ENCODE measurements at regions of chr11 and their contacts with region 1.

Region 1: DNA sequence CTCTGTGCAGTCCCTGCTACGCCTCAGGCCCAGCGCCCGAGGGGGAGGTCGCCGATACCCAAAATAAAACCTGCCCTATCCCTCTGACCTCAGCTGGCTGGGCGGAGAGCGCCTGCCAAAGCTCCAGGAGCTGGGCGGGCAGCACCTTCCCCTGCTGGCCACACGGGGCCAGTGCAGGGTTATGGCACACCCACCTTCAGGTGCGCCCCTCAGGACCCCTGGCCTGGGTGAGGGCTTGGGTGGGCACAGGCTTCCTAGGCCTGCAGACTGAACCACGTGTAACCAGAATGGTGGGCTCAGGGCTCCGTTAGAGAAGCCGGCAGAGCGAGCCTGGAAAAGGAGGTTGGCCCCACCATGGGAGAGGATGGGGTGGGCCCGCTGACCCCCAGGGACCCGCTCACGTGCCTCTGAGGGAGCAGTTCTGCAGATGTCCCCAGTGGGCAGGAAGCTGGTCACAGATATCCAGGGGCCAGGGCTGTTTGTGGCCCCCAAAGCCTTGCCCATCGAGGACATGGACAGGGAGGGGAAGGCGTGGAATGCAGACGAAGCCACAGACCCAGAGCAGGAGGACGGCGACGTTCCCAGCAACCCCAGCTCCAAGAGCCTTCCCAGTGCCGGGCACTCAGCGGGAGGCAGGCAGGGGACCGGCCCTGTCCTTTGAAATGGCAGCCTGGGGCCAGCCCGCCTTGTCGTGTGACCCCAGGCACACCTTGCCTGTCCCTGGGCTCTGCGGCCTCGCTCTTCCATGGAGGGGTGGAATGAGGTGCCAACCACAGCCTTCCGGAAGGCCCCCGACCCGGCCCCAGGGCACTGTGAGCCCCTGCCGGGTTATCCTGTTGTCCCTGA is 1.6 kb upstream of the TNNT3 start:
- DNase-seq: no peak
- ATAC-seq: peak in 1 of 2 donors; percentile 9
- H3K4me3 ChIP-seq: no peak overlapping the region
- H3K27ac ChIP-seq: no peak overlapping the region
- H3K4me1 ChIP-seq: no peaks in the 10 kb centered on the region
- H3K27me3 ChIP-seq: no peaks in the 10 kb centered on the region
- CTCF ChIP-seq: peak; percentile 39

Region 2: DNA sequence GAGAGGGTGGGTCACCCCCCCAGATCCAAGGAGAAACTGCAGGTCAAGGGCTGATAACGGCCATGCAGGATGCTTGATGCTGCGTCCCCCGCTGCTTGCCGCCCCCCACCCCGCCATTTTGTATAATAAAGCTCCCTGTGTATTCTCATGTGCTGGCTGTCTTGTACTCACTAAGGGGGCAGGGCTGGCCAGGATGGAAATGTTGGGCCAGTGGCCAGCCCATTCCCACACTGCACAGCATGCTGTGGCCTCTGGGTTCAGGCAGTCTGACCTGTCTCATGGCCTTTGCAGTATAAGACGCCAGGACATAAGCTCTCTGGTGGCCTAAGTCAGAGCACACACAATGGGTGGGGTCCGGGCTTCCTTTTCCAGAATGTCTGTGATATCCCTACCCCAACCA is 25.8 kb before region 1 on chr11:
- intact Hi-C with region 1: loop called (anchors 2 kb)
- DNase-seq: no peak
- ATAC-seq: no peak
- H3K4me3 ChIP-seq: no peak overlapping the region
- H3K27ac ChIP-seq: no peak overlapping the region
- H3K4me1 ChIP-seq: no peaks in the 10 kb centered on the region
- H3K27me3 ChIP-seq: no peaks in the 10 kb centered on the region
- CTCF ChIP-seq: no peak

Region 3: DNA sequence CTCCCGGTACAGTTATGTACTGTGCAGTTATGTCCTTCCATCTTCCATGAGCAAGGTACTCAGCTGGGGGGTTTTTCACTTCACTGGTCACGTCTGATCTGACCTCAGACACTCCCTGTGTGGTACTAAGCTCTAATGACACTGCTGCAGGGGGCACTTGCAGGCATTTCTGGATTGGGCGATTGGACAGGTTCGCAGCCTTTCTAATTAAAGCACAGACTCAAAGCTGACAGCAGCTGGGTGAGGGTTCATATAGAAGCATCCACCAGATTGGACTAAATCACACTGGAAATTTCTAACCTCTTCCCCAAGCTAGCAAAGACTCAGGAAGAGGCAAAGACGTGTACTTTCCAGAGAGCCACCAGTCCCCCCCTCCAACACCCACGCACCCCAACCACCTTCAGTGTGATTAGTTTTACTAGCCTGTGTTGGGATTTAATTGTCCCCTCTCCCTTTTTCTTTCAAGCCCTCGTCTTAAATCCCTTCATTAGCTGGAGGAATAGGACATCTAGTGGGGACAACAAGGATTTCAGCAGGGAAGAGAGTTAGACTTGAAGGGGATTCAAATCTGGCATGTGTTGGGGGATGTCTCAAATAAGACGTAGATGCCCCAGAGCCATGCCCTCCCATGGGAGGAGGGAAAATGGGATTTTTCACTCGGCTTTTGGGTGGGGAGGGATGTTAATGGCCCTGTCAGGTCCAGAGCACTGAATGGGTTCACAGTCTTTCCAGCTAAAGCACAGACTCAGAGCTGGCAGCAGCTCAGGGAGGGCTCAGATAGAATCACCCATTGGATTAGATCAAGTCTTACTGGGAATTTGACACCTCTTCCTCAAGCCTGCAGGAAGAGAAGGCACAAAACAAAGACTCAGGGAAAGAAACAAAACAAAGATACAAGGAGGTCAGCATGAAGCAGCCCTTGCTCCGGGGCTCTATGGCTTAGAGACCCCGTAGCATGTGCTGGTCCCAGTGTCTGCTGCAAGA is 232.3 kb after region 1 on chr11:
- intact Hi-C with region 1: no loop called
- DNase-seq: no peak
- ATAC-seq: no peak
- H3K4me3 ChIP-seq: no peak overlapping the region
- H3K27ac ChIP-seq: no peak overlapping the region
- H3K4me1 ChIP-seq: peaks cover 8% of the 10 kb centered on the region
- H3K27me3 ChIP-seq: peaks cover 57% of the 10 kb centered on the region
- CTCF ChIP-seq: peak; percentile 15

Measured in lower lobe of right lung (tissue), 2 donors.